CD8-positive, alpha-beta T cell (primary cell): ENCODE measurements at regions of chr10 and their contacts with region 1.

Region 1: GRCh38 chr10:80078448-80079311 is at the start of gene TMEM254:
- DNase-seq: peak; percentile 73 to 92 (median 90)
- ATAC-seq: peak; percentile 85
- H3K4me3 ChIP-seq: peak within 1 kb of the TSS; percentile 90 to 100
- H3K4me3 Mint-ChIP-seq: peak within 1 kb of the TSS; percentile 88
- H3K27ac ChIP-seq: peak within 1 kb of the TSS; percentile 85 to 91
- H3K27ac Mint-ChIP-seq: peak within 1 kb of the TSS; percentile 91
- H3K4me1 ChIP-seq: peaks cover 6% of the 10 kb centered on the region
- H3K4me1 Mint-ChIP-seq: peaks cover 21% of the 10 kb centered on the region
- H3K27me3 ChIP-seq: no peaks in the 10 kb centered on the region
- H3K27me3 Mint-ChIP-seq: no peaks in the 10 kb centered on the region
- CTCF ChIP-seq: no peak
- total RNA-seq, gene TMEM254: 3.5 to 4.0 TPM

Region 2: GRCh38 chr10:78302989-78303854 is 1775.5 kb before region 1 on chr10:
- CTCF ChIA-PET with region 1: no interaction called
- POLR2A ChIA-PET with region 1: interaction called, 3 read pairs
- intact Hi-C with region 1: loop called (anchors 5 kb)
- DNase-seq: peak; percentile 94 to 99 (median 96)
- ATAC-seq: peak; percentile 92
- H3K4me3 ChIP-seq: peak overlapping the region; percentile 73 to 82
- H3K4me3 Mint-ChIP-seq: peak overlapping the region; percentile 97
- H3K27ac ChIP-seq: peak overlapping the region; percentile 76 to 92
- H3K27ac Mint-ChIP-seq: peak overlapping the region; percentile 97
- H3K4me1 ChIP-seq: peaks cover 17% of the 10 kb centered on the region
- H3K4me1 Mint-ChIP-seq: peaks cover 20% of the 10 kb centered on the region
- H3K27me3 ChIP-seq: no peaks in the 10 kb centered on the region
- H3K27me3 Mint-ChIP-seq: no peaks in the 10 kb centered on the region
- CTCF ChIP-seq: peak; percentile 79

Region 3: GRCh38 chr10:80015911-80016830 is 62.5 kb before region 1 on chr10:
- CTCF ChIA-PET with region 1: no interaction called
- POLR2A ChIA-PET with region 1: no interaction called
- intact Hi-C with region 1: no loop called
- DNase-seq: no peak
- ATAC-seq: no peak
- H3K4me3 ChIP-seq: no peak overlapping the region
- H3K4me3 Mint-ChIP-seq: no peak overlapping the region
- H3K27ac ChIP-seq: no peak overlapping the region
- H3K27ac Mint-ChIP-seq: no peak overlapping the region
- H3K4me1 ChIP-seq: no peaks in the 10 kb centered on the region
- H3K4me1 Mint-ChIP-seq: no peaks in the 10 kb centered on the region
- H3K27me3 ChIP-seq: no peaks in the 10 kb centered on the region
- H3K27me3 Mint-ChIP-seq: peaks cover 2% of the 10 kb centered on the region
- CTCF ChIP-seq: no peak

Region 4: GRCh38 chr10:80144067-80144695 is 65.5 kb after region 1 on chr10:
- CTCF ChIA-PET with region 1: no interaction called
- POLR2A ChIA-PET with region 1: interaction called, 5 read pairs
- intact Hi-C with region 1: loop called in 1 of 2 experiments (anchors 5 kb)
- DNase-seq: peak in 7 of 9 experiments; percentile 16 to 64 (median 29)
- ATAC-seq: peak; percentile 45
- H3K4me3 ChIP-seq: peak overlapping the region; percentile 48 to 51
- H3K4me3 Mint-ChIP-seq: peak overlapping the region; percentile 83
- H3K27ac ChIP-seq: no peak overlapping the region
- H3K27ac Mint-ChIP-seq: peak overlapping the region; percentile 75
- H3K4me1 ChIP-seq: peaks cover 17% of the 10 kb centered on the region
- H3K4me1 Mint-ChIP-seq: peaks cover 17% of the 10 kb centered on the region
- H3K27me3 ChIP-seq: no peaks in the 10 kb centered on the region
- H3K27me3 Mint-ChIP-seq: peaks cover 7% of the 10 kb centered on the region
- CTCF ChIP-seq: peak; percentile 9

Region 5: DNA sequence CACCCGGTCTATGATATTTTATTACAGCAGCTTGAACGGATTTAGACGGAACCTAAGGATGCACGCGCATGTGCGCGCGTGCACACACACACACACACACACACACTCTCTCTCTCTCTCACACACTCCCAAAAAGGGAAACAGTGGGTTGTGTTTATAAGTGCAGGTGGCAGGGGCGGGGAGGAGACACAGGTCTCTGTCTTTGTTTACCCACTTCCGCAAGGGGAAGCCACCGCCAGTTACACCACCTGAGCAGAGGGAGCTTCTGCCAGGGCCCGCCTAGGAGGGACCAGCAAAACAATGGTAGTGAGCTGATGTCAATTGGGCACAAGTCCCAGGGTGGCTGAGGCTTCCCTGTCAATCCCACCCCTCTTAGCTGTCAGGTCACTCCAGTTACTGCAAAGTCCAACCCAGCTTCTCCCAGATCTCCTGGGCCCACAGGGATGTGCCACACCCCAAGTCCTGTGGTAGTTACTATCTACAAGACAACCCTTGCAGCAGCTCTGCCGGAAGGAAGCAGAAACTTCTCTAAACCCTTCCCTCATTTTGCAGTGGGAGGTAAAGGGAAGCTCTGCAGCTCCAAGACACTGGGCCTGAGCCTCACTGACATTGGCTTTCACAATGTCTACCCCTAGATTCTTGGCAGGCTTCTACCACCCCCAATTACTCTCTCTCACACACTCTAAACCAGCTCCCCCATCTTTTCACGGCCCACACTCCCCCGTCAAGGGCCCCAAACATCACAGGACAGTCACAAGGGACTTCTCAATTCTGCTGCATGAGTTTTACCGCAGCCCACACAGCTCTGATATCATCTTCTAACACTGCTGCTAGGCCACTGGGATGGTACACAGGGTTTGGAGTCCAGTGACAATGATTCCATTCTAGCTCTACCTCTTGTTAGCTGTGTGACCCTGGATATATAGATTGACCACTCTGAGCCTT is 109.1 kb after region 1 on chr10:
- CTCF ChIA-PET with region 1: interaction called, 4 read pairs
- POLR2A ChIA-PET with region 1: interaction called, 10 read pairs
- intact Hi-C with region 1: loop called in 1 of 2 experiments (anchors 5 kb)
- DNase-seq: peak; percentile 65 to 94 (median 83)
- ATAC-seq: peak; percentile 90
- H3K4me3 ChIP-seq: peak overlapping the region; percentile 34 to 42
- H3K4me3 Mint-ChIP-seq: peak overlapping the region; percentile 70
- H3K27ac ChIP-seq: peak overlapping the region; percentile 64 to 71
- H3K27ac Mint-ChIP-seq: peak overlapping the region; percentile 95
- H3K4me1 ChIP-seq: peaks cover 92% of the 10 kb centered on the region
- H3K4me1 Mint-ChIP-seq: peaks cover 86% of the 10 kb centered on the region
- H3K27me3 ChIP-seq: no peaks in the 10 kb centered on the region
- H3K27me3 Mint-ChIP-seq: no peaks in the 10 kb centered on the region
- CTCF ChIP-seq: no peak

Region 6: GRCh38 chr10:80535671-80536365 is 457.1 kb after region 1 on chr10:
- CTCF ChIA-PET with region 1: no interaction called
- POLR2A ChIA-PET with region 1: no interaction called
- intact Hi-C with region 1: loop called in 1 of 2 experiments (anchors 10 kb)
- DNase-seq: peak; percentile 45 to 90 (median 75)
- ATAC-seq: peak; percentile 85
- H3K4me3 ChIP-seq: peak overlapping the region; percentile 62 to 72
- H3K4me3 Mint-ChIP-seq: peak overlapping the region; percentile 84
- H3K27ac ChIP-seq: peak overlapping the region; percentile 85 to 91
- H3K27ac Mint-ChIP-seq: peak overlapping the region; percentile 98
- H3K4me1 ChIP-seq: peaks cover 21% of the 10 kb centered on the region
- H3K4me1 Mint-ChIP-seq: peaks cover 36% of the 10 kb centered on the region
- H3K27me3 ChIP-seq: no peaks in the 10 kb centered on the region
- H3K27me3 Mint-ChIP-seq: no peaks in the 10 kb centered on the region
- CTCF ChIP-seq: peak; percentile 70